ENCODE measurements at regions of chr17 and their contacts with region 1.

Region 1: GRCh38 chr17:75109407-75110233 is at the start of gene ARMC7:
- DNase-seq: peak; percentile 100
- H3K4me3 ChIP-seq: peak within 1 kb of the TSS; percentile 67 to 75
- H3K27ac ChIP-seq: peak within 1 kb of the TSS in 1 of 2 experiments; percentile 60; a peak in 2 of 4 replicates
- H3K4me1 ChIP-seq: peaks cover 0 to 25% of the 10 kb centered on the region in 2 experiments; a peak in 1 of 4 replicates
- H3K27me3 ChIP-seq: no peaks in the 10 kb centered on the region
- CTCF ChIP-seq: no peak
- EP300 ChIP-seq: no peak
- RAD21 ChIP-seq: no peak
- polyA plus RNA-seq, gene ARMC7: 7.3 and 10.8 TPM in 2 replicates

Region 2: GRCh38 chr17:75034236-75034908 is 75.2 kb before region 1 on chr17:
- CTCF ChIA-PET with region 1: interaction called, 10 read pairs
- POLR2A ChIA-PET with region 1: interaction called, 3 read pairs
- DNase-seq: peak; percentile 81
- H3K4me3 ChIP-seq: peak overlapping the region; percentile 67 to 98
- H3K27ac ChIP-seq: peak overlapping the region; percentile 90 to 92
- H3K4me1 ChIP-seq: peaks cover 0 to 22% of the 10 kb centered on the region in 2 experiments; a peak in 1 of 4 replicates
- H3K27me3 ChIP-seq: no peaks in the 10 kb centered on the region
- CTCF ChIP-seq: peak; percentile 49
- EP300 ChIP-seq: peak in 1 of 2 experiments; percentile 12; a peak in 1 of 4 replicates
- RAD21 ChIP-seq: no peak

Region 3: DNA sequence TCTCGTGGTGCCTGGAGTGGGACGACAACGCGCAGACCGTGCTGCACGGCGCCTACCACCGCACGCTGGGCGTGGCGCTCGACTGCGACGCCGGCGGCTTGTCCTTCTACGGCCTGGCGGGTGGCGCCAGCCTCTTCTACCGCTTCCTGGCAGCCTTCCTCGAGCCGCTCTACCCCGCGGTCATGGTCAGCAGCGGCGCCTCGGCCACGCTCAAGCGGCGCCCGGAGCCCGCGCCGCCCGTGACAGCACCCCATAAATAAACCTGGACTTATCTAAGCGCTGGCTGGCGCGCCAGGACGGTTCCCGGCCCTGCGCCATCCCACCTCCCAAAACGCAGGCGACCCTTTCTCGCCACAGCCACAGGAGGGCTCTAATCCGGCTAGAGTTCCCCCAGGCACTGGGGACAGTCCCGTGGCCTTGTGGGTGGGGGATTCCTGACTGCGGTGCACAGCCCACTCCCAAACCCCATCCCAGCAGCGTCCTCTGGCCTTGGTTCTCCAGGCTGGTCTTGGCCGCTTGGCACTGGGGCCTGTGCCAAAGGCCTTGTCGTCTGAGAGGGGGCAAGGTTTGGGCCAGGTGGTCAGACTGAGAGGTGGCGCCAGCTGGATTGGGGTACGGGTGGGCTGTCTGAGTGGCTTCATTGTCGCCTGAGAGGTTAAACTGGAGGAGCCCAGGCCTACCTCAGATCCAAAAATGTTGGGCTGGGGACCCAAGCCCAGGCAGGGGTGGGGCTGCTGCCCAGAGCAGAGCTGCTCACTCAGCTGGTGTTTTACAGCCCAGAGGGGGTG is 31.9 kb before region 1 on chr17:
- CTCF ChIA-PET with region 1: interaction called, 16 read pairs
- POLR2A ChIA-PET with region 1: no interaction called
- DNase-seq: no peak
- H3K4me3 ChIP-seq: no peak overlapping the region
- H3K27ac ChIP-seq: no peak overlapping the region
- H3K4me1 ChIP-seq: peaks cover 5 to 18% of the 10 kb centered on the region in 2 experiments; a peak in 3 of 4 replicates
- H3K27me3 ChIP-seq: no peaks in the 10 kb centered on the region
- CTCF ChIP-seq: no peak
- EP300 ChIP-seq: no peak
- RAD21 ChIP-seq: no peak

Region 4: DNA sequence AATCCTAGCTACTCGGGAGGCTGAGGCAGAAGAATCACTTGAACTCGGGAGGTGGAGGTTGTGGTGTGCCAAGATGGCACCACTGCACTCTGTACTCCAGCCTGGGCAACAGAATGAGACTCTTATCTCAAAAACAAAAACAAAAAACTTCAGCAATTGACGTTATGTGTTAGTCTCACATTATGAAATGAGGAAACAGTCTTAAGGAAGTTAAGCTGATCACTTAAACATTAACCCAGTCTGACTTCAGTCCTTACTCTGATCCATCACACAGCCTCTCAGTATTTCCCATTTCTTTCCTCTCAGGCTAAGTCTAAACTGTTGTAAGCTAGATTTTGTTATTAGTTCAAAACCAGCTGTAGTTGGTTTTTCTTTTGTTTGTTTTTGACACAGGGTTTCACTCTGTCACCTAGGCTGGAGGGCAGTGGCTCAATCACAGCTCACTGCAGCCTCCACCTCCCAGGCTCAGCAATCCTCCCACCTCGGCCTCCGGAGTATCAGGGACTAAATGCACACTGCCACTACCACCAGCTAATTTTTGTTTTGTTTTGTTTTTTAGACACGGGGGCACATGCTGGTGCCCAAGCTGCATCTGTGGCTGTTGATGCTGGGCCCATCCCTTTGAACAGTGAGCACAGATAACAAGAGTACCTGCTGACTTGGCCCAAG is 38.4 kb after region 1 on chr17:
- CTCF ChIA-PET with region 1: interaction called, 14 read pairs
- POLR2A ChIA-PET with region 1: no interaction called
- DNase-seq: no peak
- H3K4me3 ChIP-seq: no peak overlapping the region
- H3K27ac ChIP-seq: no peak overlapping the region
- H3K4me1 ChIP-seq: no peaks in the 10 kb centered on the region; a peak in 2 of 4 replicates
- H3K27me3 ChIP-seq: no peaks in the 10 kb centered on the region
- CTCF ChIP-seq: no peak
- EP300 ChIP-seq: no peak
- RAD21 ChIP-seq: no peak

Region 5: GRCh38 chr17:75191584-75191983 is 82.0 kb after region 1 on chr17:
- CTCF ChIA-PET with region 1: interaction called, 231 read pairs
- POLR2A ChIA-PET with region 1: no interaction called
- DNase-seq: no peak
- H3K4me3 ChIP-seq: no peak overlapping the region
- H3K27ac ChIP-seq: no peak overlapping the region
- H3K4me1 ChIP-seq: no peaks in the 10 kb centered on the region; a peak in 1 of 4 replicates
- H3K27me3 ChIP-seq: no peaks in the 10 kb centered on the region
- CTCF ChIP-seq: no peak
- EP300 ChIP-seq: no peak
- RAD21 ChIP-seq: no peak

Region 6: GRCh38 chr17:75261336-75262111 is 151.9 kb after region 1 on chr17 and contains the starts of genes GGA3 and MRPS7:
- CTCF ChIA-PET with region 1: interaction called, 11 read pairs
- POLR2A ChIA-PET with region 1: no interaction called
- DNase-seq: peak; percentile 100
- H3K4me3 ChIP-seq: peak within 1 kb of the TSS; percentile 88 to 99
- H3K27ac ChIP-seq: peak within 1 kb of the TSS; percentile 96 to 98
- H3K4me1 ChIP-seq: peaks cover 4 to 21% of the 10 kb centered on the region in 2 experiments; a peak in 2 of 4 replicates
- H3K27me3 ChIP-seq: no peaks in the 10 kb centered on the region
- CTCF ChIP-seq: no peak
- EP300 ChIP-seq: no peak
- RAD21 ChIP-seq: no peak
- polyA plus RNA-seq, gene GGA3: 42.5 and 43.7 TPM in 2 replicates
- polyA plus RNA-seq, gene MRPS7: 82.8 and 90.4 TPM in 2 replicates

Measured in SK-N-SH (cell line).